ENCODE measurements at regions of chr13 and their contacts with region 1.

Region 1: GRCh38 chr13:41827507-41828213 is 133.2 kb downstream of the VWA8 start:
- DNase-seq: no peak
- H3K4me3 ChIP-seq: no peak overlapping the region
- H3K27ac ChIP-seq: peak overlapping the region; percentile 42 to 70 (median 56)
- H3K4me1 ChIP-seq: peaks cover 7 to 35% (median 26%) of the 10 kb centered on the region in 4 donors
- H3K27me3 ChIP-seq: no peaks in the 10 kb centered on the region
- CTCF ChIP-seq: no peak
- EP300 ChIP-seq: no peak
- POLR2A ChIP-seq: no peak

Region 2: DNA sequence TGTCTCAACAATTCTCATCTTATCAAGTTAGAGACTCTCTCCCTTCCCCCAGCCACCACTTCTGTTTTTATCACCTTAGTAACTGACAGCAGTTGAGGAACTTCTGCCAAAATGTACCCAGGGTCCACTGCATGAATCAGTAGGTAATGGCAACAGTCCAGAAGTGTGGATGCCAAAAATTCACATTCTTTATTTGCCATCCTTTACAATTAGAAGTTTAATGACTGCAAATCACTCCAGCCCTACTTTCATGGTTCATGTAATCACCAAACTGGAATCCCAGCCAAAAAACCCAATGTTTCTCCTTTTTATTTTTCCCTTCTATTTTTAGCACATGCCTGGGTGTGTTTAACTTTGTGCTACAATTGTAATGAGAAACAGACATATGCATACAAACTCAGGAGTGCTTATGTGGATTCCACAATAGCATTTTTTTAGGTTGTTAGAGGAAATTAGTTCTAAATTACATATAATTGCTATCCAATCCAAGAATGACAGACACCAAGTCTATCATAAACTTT is 126.8 kb before region 1 on chr13:
- intact Hi-C with region 1: loop called (anchors 10 kb)
- DNase-seq: no peak
- H3K4me3 ChIP-seq: no peak overlapping the region
- H3K27ac ChIP-seq: peak overlapping the region in 1 of 4 donors; percentile 17
- H3K4me1 ChIP-seq: peaks cover 17 to 47% (median 24%) of the 10 kb centered on the region in 4 donors
- H3K27me3 ChIP-seq: no peaks in the 10 kb centered on the region
- CTCF ChIP-seq: no peak
- EP300 ChIP-seq: no peak
- POLR2A ChIP-seq: no peak

Measured in esophagus muscularis mucosa (tissue), 4 donors.